T-cell (primary cell): ENCODE measurements at regions of chr2 and their contacts with region 1.

Region 1: DNA sequence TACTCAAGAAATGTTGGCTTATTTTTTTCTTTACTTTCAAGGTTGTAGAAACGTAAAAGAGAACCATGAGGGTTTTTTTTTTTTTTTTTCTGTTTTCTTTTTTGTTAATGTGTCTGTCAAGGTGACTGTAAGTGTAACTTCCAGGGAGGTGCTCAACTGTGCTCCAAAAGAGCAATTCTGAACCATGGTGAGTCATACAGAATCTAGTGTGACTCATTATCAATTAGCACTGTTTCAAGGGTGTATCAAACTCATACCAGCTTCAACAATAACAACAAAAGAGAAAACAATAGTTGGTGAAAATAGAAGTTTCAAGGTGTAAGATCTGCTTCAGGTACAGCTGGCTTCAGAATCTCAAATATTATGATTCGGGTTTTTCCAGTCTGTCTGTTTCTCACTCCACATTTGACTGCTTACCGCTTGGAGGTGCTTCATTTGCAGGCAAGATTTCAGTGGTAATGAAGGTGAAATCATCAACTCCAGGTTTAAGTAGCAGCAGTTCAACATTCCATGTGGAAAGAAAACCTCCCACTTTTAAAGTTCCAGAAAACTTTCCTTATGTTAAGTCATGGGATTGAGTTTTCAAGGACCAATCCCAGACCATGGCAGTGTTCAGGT is 850.6 kb downstream of the CNTNAP5 start:
- DNase-seq: no peak
- ATAC-seq: no peak
- H3K4me3 ChIP-seq: no peak overlapping the region
- H3K4me3 Mint-ChIP-seq: no peak overlapping the region
- H3K27ac ChIP-seq: no peak overlapping the region
- H3K27ac Mint-ChIP-seq: no peak overlapping the region
- H3K4me1 ChIP-seq: no peaks in the 10 kb centered on the region
- H3K4me1 Mint-ChIP-seq: no peaks in the 10 kb centered on the region
- H3K27me3 ChIP-seq: no peaks in the 10 kb centered on the region
- H3K27me3 Mint-ChIP-seq: no peaks in the 10 kb centered on the region

Region 2: GRCh38 chr2:124081154-124081716 is 794.5 kb before region 1 on chr2:
- CTCF ChIA-PET with region 1: no interaction called
- POLR2A ChIA-PET with region 1: no interaction called
- DNase-seq: no peak
- ATAC-seq: no peak
- H3K4me3 ChIP-seq: no peak overlapping the region
- H3K4me3 Mint-ChIP-seq: no peak overlapping the region
- H3K27ac ChIP-seq: no peak overlapping the region
- H3K27ac Mint-ChIP-seq: no peak overlapping the region
- H3K4me1 ChIP-seq: no peaks in the 10 kb centered on the region
- H3K4me1 Mint-ChIP-seq: no peaks in the 10 kb centered on the region
- H3K27me3 ChIP-seq: no peaks in the 10 kb centered on the region
- H3K27me3 Mint-ChIP-seq: no peaks in the 10 kb centered on the region

Region 3: GRCh38 chr2:124832521-124832920 is 43.2 kb before region 1 on chr2:
- CTCF ChIA-PET with region 1: no interaction called
- POLR2A ChIA-PET with region 1: no interaction called
- DNase-seq: no peak
- ATAC-seq: no peak
- H3K4me3 ChIP-seq: no peak overlapping the region
- H3K4me3 Mint-ChIP-seq: no peak overlapping the region
- H3K27ac ChIP-seq: no peak overlapping the region
- H3K27ac Mint-ChIP-seq: no peak overlapping the region
- H3K4me1 ChIP-seq: no peaks in the 10 kb centered on the region
- H3K4me1 Mint-ChIP-seq: no peaks in the 10 kb centered on the region
- H3K27me3 ChIP-seq: no peaks in the 10 kb centered on the region
- H3K27me3 Mint-ChIP-seq: no peaks in the 10 kb centered on the region

Region 4: DNA sequence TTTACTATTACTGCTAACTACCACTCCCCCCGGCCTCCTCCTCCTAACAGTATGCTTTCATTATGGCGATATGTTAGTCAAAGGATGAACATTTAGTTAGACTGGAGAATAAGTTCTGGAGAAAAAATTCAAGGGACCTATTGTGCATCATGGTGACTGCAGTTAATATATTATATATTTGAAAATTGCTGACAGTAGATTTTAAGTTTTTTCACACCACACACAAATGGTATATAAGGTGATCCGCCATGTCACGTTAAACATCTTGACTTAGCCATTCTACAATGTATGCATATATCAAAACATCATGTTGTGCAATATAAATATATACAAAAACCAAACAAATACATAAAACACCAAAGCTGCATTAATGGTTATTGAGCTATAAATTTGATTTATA is 23.1 kb after region 1 on chr2:
- CTCF ChIA-PET with region 1: no interaction called
- POLR2A ChIA-PET with region 1: interaction called in 1 of 2 experiments, 10 read pairs
- DNase-seq: no peak
- ATAC-seq: no peak
- H3K4me3 ChIP-seq: no peak overlapping the region
- H3K4me3 Mint-ChIP-seq: no peak overlapping the region
- H3K27ac ChIP-seq: no peak overlapping the region
- H3K27ac Mint-ChIP-seq: no peak overlapping the region
- H3K4me1 ChIP-seq: no peaks in the 10 kb centered on the region
- H3K4me1 Mint-ChIP-seq: no peaks in the 10 kb centered on the region
- H3K27me3 ChIP-seq: no peaks in the 10 kb centered on the region
- H3K27me3 Mint-ChIP-seq: no peaks in the 10 kb centered on the region